Breast epithelium (tissue), 4 donors: ENCODE measurements at regions of chrX and their contacts with region 1.

Region 1: DNA sequence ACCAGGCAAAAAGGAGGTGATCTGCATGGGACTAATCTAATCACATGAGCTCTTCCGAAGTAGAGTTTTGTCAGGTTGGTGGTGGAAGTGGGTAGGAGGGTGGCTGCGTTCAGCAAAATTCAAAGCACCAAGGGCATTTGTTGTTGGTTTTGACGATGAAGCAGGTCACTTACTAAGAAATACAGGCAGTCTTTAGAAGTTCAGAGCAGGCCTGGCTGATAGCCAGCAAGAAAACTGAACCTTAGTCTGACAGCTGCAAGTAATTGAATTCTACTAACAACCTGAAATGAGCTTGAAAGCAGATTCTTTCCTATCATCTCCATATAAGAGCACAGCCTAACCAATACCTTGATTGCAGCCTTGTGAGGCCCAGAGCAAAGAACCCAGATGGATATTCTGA is 505.8 kb downstream of the KLHL13 start:
- DNase-seq: no peak
- H3K4me3 ChIP-seq: no peak overlapping the region
- H3K27ac ChIP-seq: no peak overlapping the region
- H3K4me1 ChIP-seq: no peaks in the 10 kb centered on the region
- H3K27me3 ChIP-seq: no peaks in the 10 kb centered on the region
- CTCF ChIP-seq: no peak
- POLR2A ChIP-seq: no peak

Region 2: GRCh38 chrX:117641913-117642656 is 31.3 kb after region 1 on chrX:
- intact Hi-C with region 1: loop called (anchors 1 kb)
- DNase-seq: no peak
- H3K4me3 ChIP-seq: no peak overlapping the region
- H3K27ac ChIP-seq: no peak overlapping the region
- H3K4me1 ChIP-seq: no peaks in the 10 kb centered on the region
- H3K27me3 ChIP-seq: no peaks in the 10 kb centered on the region
- CTCF ChIP-seq: no peak
- POLR2A ChIP-seq: no peak